ENCODE measurements at regions of chr7 and their contacts with region 1.

Region 1: DNA sequence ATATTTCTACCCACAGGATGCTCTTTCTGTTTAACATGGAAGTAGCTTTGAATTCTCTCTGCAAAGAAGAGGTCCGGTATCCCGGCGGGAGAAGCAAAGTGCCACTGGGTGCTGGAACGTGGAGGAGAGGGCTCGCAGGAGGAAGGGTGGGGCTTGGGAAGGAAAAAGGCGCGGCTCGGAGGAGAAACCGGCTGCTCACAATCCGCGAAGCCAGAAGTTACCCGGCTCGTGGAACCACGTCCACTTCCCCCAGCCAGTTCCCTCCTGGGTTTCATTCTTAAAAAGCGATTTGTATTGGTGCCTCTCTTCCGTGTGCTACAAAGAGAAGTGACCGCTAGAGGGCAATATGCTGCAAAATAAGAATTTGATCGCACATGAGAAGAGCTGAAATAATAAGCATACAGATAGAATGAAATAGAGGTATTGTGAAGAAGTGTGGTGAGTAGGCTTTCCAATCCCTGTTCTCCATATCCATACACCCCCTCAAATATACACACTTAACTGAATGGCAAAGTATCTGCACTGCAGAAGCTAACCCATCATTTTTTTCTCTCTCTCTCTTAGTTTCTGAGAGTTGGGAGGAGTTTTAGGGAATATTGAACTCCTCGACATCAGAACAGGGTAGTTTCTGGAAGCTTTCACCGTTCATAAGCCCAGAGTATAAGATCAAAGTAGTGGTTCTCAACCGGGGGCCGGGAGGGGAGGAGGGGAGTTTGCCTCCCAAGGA is 31.1 kb downstream of the TRIL start:
- DNase-seq: peak; percentile 44
- H3K4me3 Mint-ChIP-seq: peak overlapping the region; percentile 79
- H3K27ac Mint-ChIP-seq: no peak overlapping the region
- H3K4me1 Mint-ChIP-seq: peaks cover 25% of the 10 kb centered on the region
- H3K27me3 Mint-ChIP-seq: peaks cover 27% of the 10 kb centered on the region

Region 2: DNA sequence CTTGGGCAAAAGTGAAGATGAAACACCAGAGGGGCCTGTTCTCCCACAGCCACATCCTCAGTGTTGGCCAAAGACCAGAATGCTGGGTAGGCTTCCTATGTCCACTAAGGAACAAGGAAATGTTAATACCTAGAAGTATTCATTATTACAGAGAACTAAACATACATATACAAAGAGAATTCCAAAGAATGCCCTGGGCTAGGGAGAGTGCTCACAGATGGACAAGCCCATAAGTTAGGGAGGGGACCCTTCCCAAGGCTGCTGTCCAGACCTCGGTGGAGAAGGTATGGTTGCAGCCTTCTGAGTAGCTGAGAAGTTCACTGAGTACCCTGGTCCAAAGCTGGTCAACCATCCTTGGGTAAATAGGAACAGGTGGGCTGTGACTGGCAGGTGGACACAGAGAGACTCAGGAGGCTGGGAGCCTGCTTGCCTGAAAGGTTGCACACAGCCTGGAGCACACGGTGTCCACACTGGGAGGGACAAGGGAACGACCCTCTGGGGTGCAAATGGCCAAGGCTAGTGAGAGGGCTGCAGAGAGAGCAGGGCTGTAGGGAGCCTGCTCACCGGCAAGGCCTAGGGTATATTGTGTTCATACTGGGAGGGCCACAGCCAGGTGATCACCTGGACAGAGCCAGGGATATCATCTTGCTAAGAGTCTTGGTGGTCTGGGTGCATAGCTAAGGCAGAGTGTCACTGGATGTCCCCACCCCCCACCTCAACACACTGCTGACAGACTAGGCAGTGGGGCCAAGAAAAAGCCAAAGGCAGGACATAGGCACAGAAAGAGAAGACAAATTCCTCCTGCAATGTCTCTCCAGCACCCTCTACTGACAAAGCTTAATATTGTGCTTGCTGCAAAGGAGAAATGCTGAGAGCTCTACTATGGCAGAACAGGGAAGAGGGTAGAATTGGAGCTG is 179.0 kb after region 1 on chr7:
- intact Hi-C with region 1: loop called (anchors 1 kb)
- DNase-seq: peak; percentile 8
- H3K4me3 Mint-ChIP-seq: no peak overlapping the region
- H3K27ac Mint-ChIP-seq: no peak overlapping the region
- H3K4me1 Mint-ChIP-seq: peaks cover 7% of the 10 kb centered on the region
- H3K27me3 Mint-ChIP-seq: peaks cover 15% of the 10 kb centered on the region

Region 3: DNA sequence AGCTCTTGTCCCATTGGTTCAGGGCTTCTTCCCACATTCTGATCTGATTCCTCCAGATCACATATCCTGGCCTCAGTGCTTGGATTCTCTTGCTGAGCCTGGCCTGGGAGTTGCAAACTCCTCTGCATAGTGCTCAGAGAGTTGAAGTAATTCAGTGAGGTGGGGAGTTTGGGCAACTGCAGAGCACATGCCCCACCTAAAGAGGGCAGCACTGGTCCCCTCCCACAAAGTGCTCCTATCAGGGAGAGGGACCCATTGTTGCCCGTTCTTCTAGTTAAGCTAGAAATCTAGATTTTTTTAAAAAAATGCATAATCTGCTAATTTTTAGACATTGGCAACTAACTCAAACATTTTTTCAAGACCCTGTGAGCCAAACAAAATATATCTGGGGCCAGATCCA is 312.6 kb after region 1 on chr7:
- intact Hi-C with region 1: loop called (anchors 10 kb)
- DNase-seq: no peak
- H3K4me3 Mint-ChIP-seq: no peak overlapping the region
- H3K27ac Mint-ChIP-seq: no peak overlapping the region
- H3K4me1 Mint-ChIP-seq: peaks cover 13% of the 10 kb centered on the region
- H3K27me3 Mint-ChIP-seq: peaks cover 28% of the 10 kb centered on the region